RWPE1 (cell line): ENCODE measurements at regions of chr16 and their contacts with region 1.

Region 1: DNA sequence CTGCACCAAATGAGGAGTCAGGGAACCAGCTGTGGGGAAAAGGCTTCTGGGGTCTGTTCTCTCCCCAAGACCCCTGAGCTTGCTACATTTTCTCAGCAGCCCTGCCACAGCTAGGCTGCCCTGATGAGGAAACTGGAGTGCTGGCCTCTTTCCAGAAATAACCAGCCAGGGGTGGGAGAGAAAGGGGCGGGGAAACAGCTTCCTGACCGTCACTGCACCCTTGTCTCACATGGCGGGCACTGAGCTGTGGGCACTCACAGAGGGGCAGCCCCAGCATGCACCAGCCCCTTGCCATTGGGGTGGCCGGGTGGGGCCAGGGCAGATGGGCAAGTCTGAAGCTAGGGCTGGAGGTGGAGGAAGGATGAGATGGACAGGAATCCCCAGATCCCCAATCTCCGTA is 2.9 kb downstream of the SRL start:
- DNase-seq: no peak
- H3K27ac ChIP-seq: no peak overlapping the region
- CTCF ChIP-seq: no peak

Region 2: GRCh38 chr16:4200000-4200780 is 38.8 kb before region 1 on chr16:
- CTCF ChIA-PET with region 1: interaction called, 10 read pairs
- POLR2A ChIA-PET with region 1: no interaction called
- DNase-seq: peak; percentile 69
- H3K27ac ChIP-seq: no peak overlapping the region
- CTCF ChIP-seq: peak; percentile 66